ENCODE measurements at regions of chr6 and their contacts with region 1.

Region 1: DNA sequence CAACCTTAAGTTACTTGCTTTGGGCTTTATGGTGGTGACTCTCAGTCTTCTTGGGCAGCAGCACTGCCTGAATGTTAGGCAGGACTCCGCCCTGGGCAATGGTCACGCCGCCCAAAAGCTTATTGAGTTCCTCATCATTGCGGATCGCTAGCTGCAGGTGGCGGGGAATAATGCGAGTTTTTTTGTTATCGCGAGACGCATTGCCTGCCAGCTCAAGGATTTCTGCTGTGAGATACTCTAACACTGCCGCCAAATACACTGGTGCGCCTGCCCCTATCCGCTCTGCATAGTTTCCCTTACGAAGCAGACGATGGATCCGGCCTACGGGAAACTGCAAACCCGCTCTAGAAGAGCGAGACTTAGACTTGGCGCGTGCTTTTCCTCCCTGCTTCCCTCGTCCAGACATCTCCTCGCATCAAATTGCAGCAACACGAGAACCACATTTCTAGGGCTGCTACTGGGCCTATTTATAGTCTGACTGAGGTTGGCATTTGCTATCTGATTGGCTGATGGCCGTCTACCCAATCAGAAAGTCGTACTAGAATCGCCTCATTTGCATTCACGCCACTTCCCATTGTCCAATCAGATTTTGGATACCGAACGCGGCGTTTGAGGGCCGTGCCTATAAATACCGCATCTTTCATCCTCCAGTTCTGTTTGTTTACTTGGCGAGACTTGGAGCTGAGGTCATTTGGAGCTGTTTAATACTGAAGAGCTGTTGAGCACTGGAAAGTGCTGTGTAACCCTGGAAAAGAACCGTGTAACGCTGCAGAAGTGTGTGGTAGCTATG is 28.2 kb upstream of the SLC17A4 start:
- DNase-seq: no peak
- ATAC-seq: no peak
- H3K4me3 ChIP-seq: no peak overlapping the region
- H3K27ac ChIP-seq: no peak overlapping the region
- H3K4me1 ChIP-seq: no peaks in the 10 kb centered on the region
- H3K27me3 ChIP-seq: peaks cover 0 to 23% (median 0%) of the 10 kb centered on the region in 9 donors
- CTCF ChIP-seq: no peak
- POLR2A ChIP-seq: no peak

Region 2: DNA sequence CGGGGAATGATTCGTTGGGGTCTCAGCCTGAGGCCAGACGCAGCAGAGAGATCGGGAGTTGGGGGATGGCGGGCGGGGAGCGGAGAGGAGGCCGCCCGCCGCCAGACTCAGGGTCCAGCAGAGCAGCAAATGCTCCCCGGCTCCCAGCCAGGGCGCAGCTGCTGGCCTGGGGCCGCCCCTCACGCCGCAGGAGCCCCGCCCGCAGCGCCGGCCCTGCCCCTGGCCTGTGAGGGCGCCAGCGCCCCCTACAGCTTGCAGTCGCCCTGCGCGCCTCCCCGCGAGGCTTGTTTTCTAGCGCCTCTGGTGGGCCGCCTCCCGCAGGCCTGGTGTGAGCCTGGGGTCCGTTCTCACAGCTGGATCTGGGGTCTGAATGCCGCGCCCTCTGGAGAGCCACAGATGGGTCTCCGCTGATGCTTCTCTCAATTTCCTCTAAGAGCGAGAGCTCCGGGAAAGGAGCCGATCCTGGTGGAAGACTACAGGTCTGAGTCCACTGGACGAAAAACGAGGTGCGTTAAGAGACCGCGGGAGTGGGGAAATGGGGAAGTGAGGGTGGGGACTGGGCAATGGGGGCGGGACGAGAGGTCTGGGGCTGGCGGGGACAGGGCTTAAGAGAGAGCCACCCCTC is 266.2 kb after region 1 on chr6:
- intact Hi-C with region 1: loop called in 1 of 10 experiments (anchors 10 kb)
- DNase-seq: peak; percentile 95 to 98 (median 96)
- ATAC-seq: peak; percentile 88 to 98 (median 98)
- H3K4me3 ChIP-seq: peak overlapping the region; percentile 38 to 83 (median 66)
- H3K27ac ChIP-seq: peak overlapping the region; percentile 80 to 95 (median 91)
- H3K4me1 ChIP-seq: peaks cover 0 to 23% (median 11%) of the 10 kb centered on the region in 12 donors
- H3K27me3 ChIP-seq: no peaks in the 10 kb centered on the region
- CTCF ChIP-seq: peak; percentile 97 to 100 (median 99)
- POLR2A ChIP-seq: peak in 1 of 2 donors; percentile 85

Measured in heart left ventricle (tissue), 16 donors.